ENCODE measurements at regions of chr2 and their contacts with region 1.

Region 1: DNA sequence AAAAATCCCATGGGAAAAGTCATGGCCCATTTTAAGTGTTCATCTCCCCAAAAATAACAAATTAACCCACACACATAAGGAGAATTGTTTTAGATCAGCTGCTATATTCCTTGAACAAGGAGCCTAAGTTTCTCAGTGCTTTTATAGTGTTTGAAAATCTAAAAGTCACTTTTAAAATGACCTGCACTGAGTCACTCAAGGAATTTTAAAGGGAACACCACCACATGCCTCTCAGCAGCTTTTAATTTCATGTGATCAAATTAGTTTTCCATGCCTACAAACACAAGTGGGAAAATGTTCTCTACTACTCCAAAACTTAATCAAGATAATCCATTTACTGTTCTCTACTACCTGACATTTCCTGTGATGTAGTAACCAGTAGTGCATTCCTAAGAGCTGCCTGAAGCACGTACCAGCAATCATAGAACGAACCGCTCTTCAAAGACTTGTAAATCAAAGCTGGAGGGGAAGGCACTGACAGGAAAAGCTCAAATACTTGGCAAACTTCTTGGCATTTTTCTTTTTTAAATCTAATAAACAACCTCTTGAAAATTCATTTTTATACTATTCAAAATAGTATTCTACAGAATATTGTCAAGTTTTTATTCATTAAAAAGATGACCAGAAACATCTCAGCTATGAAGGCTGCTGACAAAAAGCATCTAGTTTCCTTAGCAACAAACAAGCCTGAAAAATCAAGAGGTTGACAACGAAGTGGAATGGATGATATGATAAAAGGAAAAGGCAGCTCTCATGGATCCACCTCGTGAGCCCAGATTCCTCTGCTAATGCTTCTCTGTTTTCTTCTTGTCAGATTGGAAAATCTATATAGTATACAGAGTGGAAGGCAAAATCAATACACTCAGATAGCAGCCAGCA is 37.2 kb downstream of the LRPPRC start:
- DNase-seq: no peak
- ATAC-seq: no peak
- H3K4me3 ChIP-seq: no peak overlapping the region
- H3K4me3 Mint-ChIP-seq: no peak overlapping the region
- H3K27ac ChIP-seq: no peak overlapping the region
- H3K27ac Mint-ChIP-seq: no peak overlapping the region
- H3K4me1 ChIP-seq: no peaks in the 10 kb centered on the region
- H3K4me1 Mint-ChIP-seq: no peaks in the 10 kb centered on the region
- H3K27me3 ChIP-seq: no peaks in the 10 kb centered on the region
- H3K27me3 Mint-ChIP-seq: no peaks in the 10 kb centered on the region

Region 2: GRCh38 chr2:42928692-42929545 is 1029.7 kb before region 1 on chr2:
- CTCF ChIA-PET with region 1: no interaction called
- POLR2A ChIA-PET with region 1: no interaction called
- DNase-seq: no peak
- ATAC-seq: no peak
- H3K4me3 ChIP-seq: no peak overlapping the region
- H3K4me3 Mint-ChIP-seq: no peak overlapping the region
- H3K27ac ChIP-seq: no peak overlapping the region
- H3K27ac Mint-ChIP-seq: no peak overlapping the region
- H3K4me1 ChIP-seq: no peaks in the 10 kb centered on the region
- H3K4me1 Mint-ChIP-seq: no peaks in the 10 kb centered on the region
- H3K27me3 ChIP-seq: peaks cover 0 to 9% of the 10 kb centered on the region in 2 experiments
- H3K27me3 Mint-ChIP-seq: no peaks in the 10 kb centered on the region

Region 3: DNA sequence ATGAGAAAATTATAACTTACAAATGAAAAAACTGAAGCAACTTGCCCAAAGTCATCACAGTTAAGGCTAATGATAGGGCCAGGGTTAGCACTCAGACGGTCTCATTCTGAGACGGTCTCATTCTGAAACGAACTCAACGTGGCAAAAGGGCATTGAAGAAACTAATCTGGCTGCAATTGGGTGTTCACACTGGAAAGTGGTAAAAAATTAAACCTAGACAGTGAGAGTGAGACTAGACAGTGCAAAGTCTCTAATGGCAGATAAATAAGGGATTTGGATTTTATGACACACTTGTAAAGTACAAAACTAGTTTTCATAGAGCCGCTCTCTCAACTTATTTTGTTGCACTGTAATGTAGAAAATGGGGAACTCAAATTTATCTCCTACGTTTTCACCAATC is 28.0 kb after region 1 on chr2:
- CTCF ChIA-PET with region 1: no interaction called
- POLR2A ChIA-PET with region 1: interaction called in 1 of 2 experiments, 12 read pairs
- DNase-seq: no peak
- ATAC-seq: no peak
- H3K4me3 ChIP-seq: no peak overlapping the region
- H3K4me3 Mint-ChIP-seq: no peak overlapping the region
- H3K27ac ChIP-seq: no peak overlapping the region
- H3K27ac Mint-ChIP-seq: no peak overlapping the region
- H3K4me1 ChIP-seq: no peaks in the 10 kb centered on the region
- H3K4me1 Mint-ChIP-seq: peaks cover 38 to 45% (median 44%) of the 10 kb centered on the region in 3 donors
- H3K27me3 ChIP-seq: no peaks in the 10 kb centered on the region
- H3K27me3 Mint-ChIP-seq: no peaks in the 10 kb centered on the region